Common myeloid progenitor, CD34-positive (primary cell): ENCODE measurements at regions of chr2 and their contacts with region 1.

Region 1: DNA sequence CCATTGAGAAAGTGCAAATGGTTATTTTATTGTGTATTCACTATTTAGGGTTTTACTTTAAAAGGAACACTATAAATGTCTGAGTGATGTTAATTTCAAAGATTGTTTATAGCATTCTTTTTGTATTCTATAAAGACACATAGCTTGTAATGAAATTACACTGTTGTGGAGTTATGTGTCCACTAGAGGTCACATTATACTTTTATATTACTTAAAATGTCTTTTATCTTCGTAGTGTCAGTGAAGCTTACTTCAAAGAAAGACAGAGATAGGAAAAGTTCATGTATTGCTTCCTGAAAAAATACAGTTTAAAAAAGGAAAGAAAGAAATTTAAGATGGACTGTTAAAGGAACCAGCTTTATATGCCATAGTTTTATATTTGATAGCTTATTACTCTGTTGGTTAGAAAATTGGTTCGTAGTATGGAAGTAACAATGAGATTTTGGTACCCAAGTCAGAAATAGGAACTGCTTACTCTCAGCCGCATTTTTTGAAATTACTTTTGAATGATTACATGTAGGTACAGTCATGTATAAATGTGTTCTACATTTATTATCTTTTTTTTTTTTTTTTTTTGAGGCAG is 20.5 kb downstream of the APLF start:
- DNase-seq: peak; percentile 32 to 58 (median 52)
- H3K4me3 ChIP-seq: no peak overlapping the region
- H3K27ac ChIP-seq: no peak overlapping the region
- H3K4me1 ChIP-seq: peaks cover 0 to 7% (median 2%) of the 10 kb centered on the region in 4 experiments
- H3K27me3 ChIP-seq: no peaks in the 10 kb centered on the region

Region 2: DNA sequence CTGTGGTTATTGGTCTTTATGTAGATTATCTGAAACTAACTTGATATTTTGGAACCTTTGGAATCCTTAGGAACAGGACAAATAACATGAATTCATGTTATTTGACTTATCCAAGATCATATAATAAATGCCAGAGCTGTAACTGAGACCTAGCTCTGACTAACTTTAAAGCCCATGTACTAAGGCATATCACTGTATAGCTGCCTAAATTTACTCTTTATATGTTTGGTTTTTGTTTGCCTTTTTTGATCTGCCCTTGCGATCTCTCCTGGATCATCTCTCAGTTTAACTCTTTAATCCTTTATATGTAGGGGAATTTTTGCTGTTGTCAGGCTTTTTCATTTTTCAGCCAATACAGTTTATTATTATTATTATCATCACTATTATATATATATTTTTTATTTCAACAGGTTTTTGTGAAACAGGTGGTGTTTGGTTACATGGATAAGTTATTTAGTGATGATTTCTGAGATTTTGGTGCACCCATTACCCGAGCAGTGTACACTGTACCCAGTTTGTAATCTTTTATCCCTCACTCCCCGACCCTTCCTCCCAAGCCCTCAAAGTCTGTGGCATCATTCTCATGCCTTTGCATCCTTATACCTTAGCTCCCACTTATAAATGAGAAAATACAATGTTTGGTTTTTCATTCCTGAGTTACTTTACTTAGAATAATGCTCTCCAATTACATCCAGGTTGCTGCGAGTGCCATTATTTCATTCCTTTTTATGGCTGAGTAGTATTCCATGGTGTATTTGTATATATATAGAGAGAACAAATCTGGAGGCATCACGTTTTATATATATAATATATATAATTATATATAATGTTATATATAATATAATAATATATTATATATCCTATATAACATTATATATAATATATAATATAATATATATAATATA is 28.4 kb after region 1 on chr2:
- CTCF ChIA-PET with region 1: no interaction called
- POLR2A ChIA-PET with region 1: no interaction called
- DNase-seq: peak in 2 of 3 donors; percentile 53 to 68
- H3K4me3 ChIP-seq: no peak overlapping the region
- H3K27ac ChIP-seq: no peak overlapping the region
- H3K4me1 ChIP-seq: peaks cover 0 to 2% (median 0%) of the 10 kb centered on the region in 4 experiments
- H3K27me3 ChIP-seq: no peaks in the 10 kb centered on the region

Region 3: GRCh38 chr2:68594674-68595492 is 107.0 kb after region 1 on chr2:
- CTCF ChIA-PET with region 1: interaction called, 25 read pairs
- POLR2A ChIA-PET with region 1: no interaction called
- DNase-seq: peak; percentile 58 to 75 (median 73)
- H3K4me3 ChIP-seq: no peak overlapping the region
- H3K27ac ChIP-seq: no peak overlapping the region
- H3K4me1 ChIP-seq: peaks cover 0 to 13% (median 6%) of the 10 kb centered on the region in 4 experiments
- H3K27me3 ChIP-seq: no peaks in the 10 kb centered on the region

Region 4: GRCh38 chr2:68643011-68643873 is 155.4 kb after region 1 on chr2 and contains the start of gene PROKR1:
- CTCF ChIA-PET with region 1: interaction called, 14 read pairs
- POLR2A ChIA-PET with region 1: no interaction called
- DNase-seq: peak in 1 of 3 donors; percentile 36
- H3K4me3 ChIP-seq: peak within 1 kb of the TSS; percentile 19 to 72 (median 56)
- H3K27ac ChIP-seq: no peak within 1 kb of the TSS
- H3K4me1 ChIP-seq: peaks cover 0 to 17% (median 14%) of the 10 kb centered on the region in 4 experiments
- H3K27me3 ChIP-seq: peaks cover 8 to 43% (median 25%) of the 10 kb centered on the region in 5 experiments